ENCODE measurements at regions of chr14 and their contacts with region 1.

Region 1: DNA sequence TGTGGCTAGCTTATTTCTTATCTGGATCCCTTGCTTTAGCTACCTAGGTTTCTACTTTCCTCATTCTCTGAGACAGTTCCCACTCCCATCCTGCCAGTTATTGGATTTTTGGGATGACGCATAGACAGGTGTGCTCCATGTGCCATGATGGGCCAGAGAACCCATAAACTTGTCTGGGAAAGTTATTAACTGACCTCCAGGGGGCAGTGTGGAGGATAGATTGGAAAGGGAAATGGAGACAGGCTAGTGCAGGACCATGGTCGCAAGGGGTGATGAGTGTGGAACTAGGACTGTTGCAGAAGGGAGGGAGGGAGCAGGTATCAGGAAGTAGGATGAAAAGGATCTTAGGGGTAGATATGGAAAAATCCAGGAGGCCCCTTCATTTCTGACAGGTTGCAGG is 80.3 kb downstream of the ESRRB start:
- DNase-seq: no peak

Region 2: DNA sequence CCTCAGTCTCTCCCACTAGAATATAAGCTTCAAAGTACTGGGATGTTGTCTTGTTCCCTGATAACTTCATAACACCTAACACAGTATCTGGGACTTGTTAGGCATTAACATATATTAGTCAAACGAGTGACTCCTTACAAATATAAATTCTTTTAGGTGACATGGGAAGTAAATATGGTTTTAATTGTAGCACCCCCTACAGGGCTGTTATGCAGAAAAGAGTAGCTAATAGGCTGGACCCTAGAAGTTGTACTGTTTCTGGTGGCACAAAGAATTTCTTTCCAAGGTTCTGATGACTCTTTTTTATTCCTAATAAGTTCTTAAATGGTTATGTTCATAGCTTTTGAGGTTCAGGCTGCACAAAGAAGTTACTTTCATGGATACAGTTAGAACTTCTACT is 274.7 kb before region 1 on chr14:
- intact Hi-C with region 1: no loop called
- DNase-seq: no peak

Region 3: DNA sequence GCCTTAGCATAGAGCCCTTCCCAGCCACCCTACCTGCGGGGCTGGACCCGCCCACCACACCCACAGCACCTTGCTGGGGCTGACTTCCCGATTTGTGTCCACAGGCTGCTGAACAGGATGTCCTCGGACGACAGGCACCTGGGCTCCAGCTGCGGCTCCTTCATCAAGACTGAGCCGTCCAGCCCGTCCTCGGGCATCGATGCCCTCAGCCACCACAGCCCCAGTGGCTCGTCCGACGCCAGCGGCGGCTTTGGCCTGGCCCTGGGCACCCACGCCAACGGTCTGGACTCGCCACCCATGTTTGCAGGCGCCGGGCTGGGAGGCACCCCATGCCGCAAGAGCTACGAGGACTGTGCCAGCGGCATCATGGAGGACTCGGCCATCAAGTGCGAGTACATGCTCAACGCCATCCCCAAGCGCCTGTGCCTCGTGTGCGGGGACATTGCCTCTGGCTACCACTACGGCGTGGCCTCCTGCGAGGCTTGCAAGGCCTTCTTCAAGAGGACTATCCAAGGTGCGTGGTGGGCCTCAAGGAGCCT is 16.9 kb before region 1 on chr14:
- intact Hi-C with region 1: loop called in 1 of 2 experiments (anchors 1 kb)
- DNase-seq: no peak

Region 4: GRCh38 chr14:76550534-76550933 is 94.3 kb after region 1 on chr14:
- intact Hi-C with region 1: no loop called
- DNase-seq: no peak

Region 5: DNA sequence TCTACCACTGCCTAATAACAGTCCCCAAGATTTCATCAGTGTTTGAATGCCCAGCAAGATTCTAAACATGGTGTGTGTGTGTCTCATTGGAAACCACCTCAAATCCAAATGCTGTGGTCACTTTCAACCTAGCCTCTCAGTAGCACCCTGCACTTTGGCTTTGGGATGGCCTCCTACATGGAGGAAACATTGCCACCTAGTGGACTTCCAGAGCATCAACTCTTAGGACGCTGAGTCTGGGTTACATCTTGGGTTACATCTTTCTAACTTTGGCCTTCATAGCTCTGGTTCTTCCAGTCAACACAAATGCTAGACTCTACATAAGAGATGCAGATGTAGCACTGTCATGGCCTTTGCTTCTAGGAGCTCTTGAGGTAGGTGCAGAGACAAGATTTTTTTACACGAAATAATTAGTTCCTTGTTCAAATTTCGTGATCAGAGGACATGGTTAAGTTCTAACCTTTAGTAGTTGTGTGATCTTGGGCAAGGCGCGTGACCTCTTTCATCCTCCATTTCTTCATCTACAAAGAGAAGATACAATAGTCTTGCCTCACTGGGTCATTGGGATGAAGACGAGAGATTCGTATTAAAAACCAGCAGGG is 191.6 kb after region 1 on chr14:
- intact Hi-C with region 1: loop called in 1 of 2 experiments (anchors 10 kb)
- DNase-seq: no peak